A673 (cell line): ENCODE measurements at regions of chr2 and their contacts with region 1.

Region 1: DNA sequence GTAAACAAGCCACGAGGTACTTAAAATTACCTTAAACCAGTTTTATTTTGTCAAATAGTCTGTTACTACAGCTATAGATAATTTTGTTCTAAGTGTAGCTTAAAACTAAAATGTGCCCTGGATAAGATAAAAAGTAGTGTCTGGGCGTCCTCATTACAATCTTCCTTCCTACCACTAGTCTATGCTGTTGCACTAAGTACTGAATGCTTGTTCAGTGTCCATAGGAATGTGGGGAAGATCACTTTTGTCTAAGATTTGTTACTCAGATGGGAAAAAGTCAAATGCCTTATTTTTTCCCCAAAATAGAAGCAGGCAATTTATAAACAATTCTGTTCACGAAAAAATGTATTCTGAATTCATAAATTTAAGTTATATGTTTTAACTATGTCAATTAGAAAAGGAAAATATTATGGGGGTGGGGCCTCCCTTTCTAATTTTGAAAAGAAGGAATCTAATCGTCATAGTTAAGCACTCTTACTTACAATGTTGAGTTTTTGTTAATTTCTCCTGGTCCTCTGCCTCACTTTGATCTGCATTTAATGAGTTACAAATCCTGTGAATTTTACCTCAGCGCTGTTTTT is 140.4 kb upstream of the VRK2 start:
- DNase-seq: peak; percentile 68
- H3K4me3 ChIP-seq: no peak overlapping the region
- H3K27ac ChIP-seq: no peak overlapping the region
- H3K4me1 ChIP-seq: no peaks in the 10 kb centered on the region
- H3K27me3 ChIP-seq: no peaks in the 10 kb centered on the region
- CTCF ChIP-seq: peak; percentile 80

Region 2: DNA sequence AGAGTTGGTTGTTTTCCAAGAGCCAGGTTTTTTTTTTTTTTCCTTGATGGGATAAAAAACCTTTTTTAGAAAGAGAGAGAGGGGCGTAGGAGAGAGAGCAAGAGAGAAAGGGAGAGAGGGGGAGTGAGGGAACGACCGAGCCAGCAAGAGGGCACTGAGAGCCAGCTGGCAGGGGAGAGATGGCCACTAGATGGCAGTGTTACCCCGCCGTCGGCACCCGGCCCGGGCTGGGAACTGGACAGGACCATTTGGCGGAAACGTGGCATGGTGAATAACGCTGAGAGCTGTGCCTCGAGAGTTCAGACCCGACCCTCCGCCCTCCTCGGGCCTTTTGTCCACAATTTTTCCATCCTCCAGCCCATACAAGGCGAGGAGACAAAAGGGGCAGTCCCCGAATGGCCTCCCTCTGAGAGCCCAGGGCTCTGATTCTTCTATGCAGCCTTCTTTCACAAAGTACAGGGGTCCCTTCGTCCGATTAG is 146.4 kb before region 1 on chr2:
- CTCF ChIA-PET with region 1: no interaction called
- POLR2A ChIA-PET with region 1: no interaction called
- intact Hi-C with region 1: loop called (anchors 5 kb)
- DNase-seq: peak; percentile 85
- H3K4me3 ChIP-seq: peak overlapping the region; percentile 27
- H3K27ac ChIP-seq: no peak overlapping the region
- H3K4me1 ChIP-seq: peaks cover 13% of the 10 kb centered on the region
- H3K27me3 ChIP-seq: no peaks in the 10 kb centered on the region
- CTCF ChIP-seq: peak; percentile 94

Region 3: DNA sequence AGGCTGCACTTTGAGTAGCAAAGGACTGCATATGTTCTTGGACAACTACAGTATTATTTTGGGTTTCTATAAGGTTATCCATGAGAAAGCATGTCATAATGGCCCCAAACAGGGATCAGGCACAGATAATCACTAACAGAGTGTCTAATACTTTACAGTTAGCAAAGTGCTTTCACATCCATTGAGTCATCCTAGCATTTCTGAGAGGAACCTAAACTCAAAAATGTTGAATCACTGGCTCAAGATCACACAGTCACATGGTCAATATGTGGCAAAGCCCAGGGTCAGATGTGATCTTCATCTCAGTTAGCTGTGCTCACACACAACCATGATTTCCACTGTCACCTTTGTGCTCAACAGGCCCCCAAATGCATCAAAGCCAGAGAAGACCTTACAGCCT is 15.8 kb before region 1 on chr2:
- CTCF ChIA-PET with region 1: no interaction called
- POLR2A ChIA-PET with region 1: no interaction called
- intact Hi-C with region 1: no loop called
- DNase-seq: no peak
- H3K4me3 ChIP-seq: no peak overlapping the region
- H3K27ac ChIP-seq: no peak overlapping the region
- H3K4me1 ChIP-seq: no peaks in the 10 kb centered on the region
- H3K27me3 ChIP-seq: no peaks in the 10 kb centered on the region
- CTCF ChIP-seq: no peak

Region 4: GRCh38 chr2:58131191-58132011 is 225.2 kb after region 1 on chr2:
- CTCF ChIA-PET with region 1: no interaction called
- POLR2A ChIA-PET with region 1: no interaction called
- intact Hi-C with region 1: loop called (anchors 5 kb)
- DNase-seq: peak; percentile 23
- H3K4me3 ChIP-seq: no peak overlapping the region
- H3K27ac ChIP-seq: no peak overlapping the region
- H3K4me1 ChIP-seq: no peaks in the 10 kb centered on the region
- H3K27me3 ChIP-seq: no peaks in the 10 kb centered on the region
- CTCF ChIP-seq: peak; percentile 52

Region 5: DNA sequence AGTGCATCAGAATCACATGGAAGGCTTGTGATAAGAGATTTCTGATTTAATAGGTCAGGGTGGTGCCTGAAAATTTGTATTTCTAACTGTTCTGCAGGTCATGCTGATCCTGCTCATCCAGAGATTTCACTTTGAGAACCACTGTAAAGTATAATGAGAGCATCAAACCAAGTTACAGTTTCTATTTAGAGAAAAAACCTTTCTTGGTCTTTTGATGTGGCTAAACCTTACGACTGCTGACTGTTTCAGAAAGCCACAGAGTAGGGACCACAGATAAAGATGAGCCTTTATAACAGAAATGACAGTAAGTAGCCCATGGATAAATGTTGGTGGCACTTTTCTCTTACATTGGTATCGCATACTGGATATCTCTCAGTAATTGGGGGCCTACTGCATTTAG is 444.2 kb after region 1 on chr2:
- CTCF ChIA-PET with region 1: no interaction called
- POLR2A ChIA-PET with region 1: no interaction called
- intact Hi-C with region 1: loop called (anchors 10 kb)
- DNase-seq: no peak
- H3K4me3 ChIP-seq: no peak overlapping the region
- H3K27ac ChIP-seq: no peak overlapping the region
- H3K4me1 ChIP-seq: no peaks in the 10 kb centered on the region
- H3K27me3 ChIP-seq: peaks cover 6% of the 10 kb centered on the region
- CTCF ChIP-seq: no peak

Region 6: GRCh38 chr2:58680755-58681310 is 774.6 kb after region 1 on chr2:
- CTCF ChIA-PET with region 1: no interaction called
- POLR2A ChIA-PET with region 1: no interaction called
- intact Hi-C with region 1: loop called (anchors 5 kb)
- DNase-seq: peak; percentile 4
- H3K4me3 ChIP-seq: no peak overlapping the region
- H3K27ac ChIP-seq: no peak overlapping the region
- H3K4me1 ChIP-seq: no peaks in the 10 kb centered on the region
- H3K27me3 ChIP-seq: no peaks in the 10 kb centered on the region
- CTCF ChIP-seq: peak; percentile 35; the same call in 1 of the 2 replicates